PC-3 (cell line): ENCODE measurements at regions of chr1 and their contacts with region 1.

Region 1: DNA sequence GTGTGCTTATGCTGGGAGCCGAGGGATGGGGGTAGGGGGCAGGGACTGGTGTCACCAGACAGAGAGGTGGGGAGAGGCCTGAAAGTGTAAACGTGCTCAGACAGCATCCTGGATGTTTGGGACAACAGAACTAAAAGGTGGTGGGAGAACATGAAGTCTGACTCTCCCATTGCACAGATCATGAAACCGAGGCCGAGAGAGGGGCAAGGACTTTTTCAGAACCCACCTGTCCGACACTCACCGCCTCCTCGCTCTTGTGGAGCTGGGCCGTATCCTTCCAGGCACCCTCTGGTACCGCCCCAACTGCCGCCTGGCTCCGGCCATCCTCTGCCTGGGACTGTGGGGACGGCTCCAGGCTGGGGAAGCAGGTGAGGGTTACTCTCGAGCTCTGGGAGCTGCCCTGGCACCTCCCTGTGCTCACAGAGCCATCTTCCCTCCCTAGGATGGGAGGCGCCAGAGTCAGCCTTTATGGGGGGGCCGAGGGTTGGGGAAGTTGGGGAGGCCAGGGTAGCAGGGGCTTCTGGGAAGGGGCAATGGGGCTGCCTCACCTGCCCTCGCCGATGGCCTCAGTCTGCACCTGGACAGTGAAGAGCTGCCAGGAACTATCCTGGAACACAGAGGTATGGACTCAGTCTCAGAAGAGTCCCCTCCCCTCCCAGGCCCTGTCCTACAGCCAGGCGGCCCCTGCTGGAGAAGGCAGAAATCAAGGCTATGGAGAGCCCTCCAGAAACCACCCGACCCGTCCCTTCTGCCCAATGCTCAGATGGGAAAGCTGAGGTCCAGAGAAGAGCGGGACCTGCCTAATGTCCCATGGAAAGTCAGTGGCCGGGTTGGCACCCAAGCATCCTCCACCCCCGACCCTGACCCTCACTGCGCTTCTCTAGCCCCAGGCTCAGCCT is 7.0 kb downstream of the ATP13A2 start:
- DNase-seq: no peak
- ATAC-seq: 0 out of 2 replicates have a peak, but pooled peaks have one; percentile 6
- H3K4me3 ChIP-seq: no peak overlapping the region
- H3K27ac ChIP-seq: peak overlapping the region; percentile 81
- H3K4me1 ChIP-seq: peaks cover 19% of the 10 kb centered on the region
- H3K27me3 ChIP-seq: no peaks in the 10 kb centered on the region
- CTCF ChIP-seq: peak; percentile 39; the same call in 1 of the 2 replicates

Region 2: GRCh38 chr1:16960560-16961296 is 44.0 kb before region 1 on chr1:
- CTCF ChIA-PET with region 1: interaction called, 3 read pairs
- POLR2A ChIA-PET with region 1: no interaction called
- intact Hi-C with region 1: loop called (anchors 5 kb)
- DNase-seq: peak; percentile 87
- ATAC-seq: peak; percentile 92
- H3K4me3 ChIP-seq: peak overlapping the region; percentile 55; the same call in 1 of the 2 replicates
- H3K27ac ChIP-seq: no peak overlapping the region
- H3K4me1 ChIP-seq: no peaks in the 10 kb centered on the region
- H3K27me3 ChIP-seq: no peaks in the 10 kb centered on the region
- CTCF ChIP-seq: peak; percentile 70